H1 (cell line): ENCODE measurements at regions of chr3 and their contacts with region 1.

Region 1: GRCh38 chr3:49093853-49094767 is at the start of gene QRICH1:
- DNase-seq: peak; percentile 91 to 96
- H3K4me3 ChIP-seq: peak within 1 kb of the TSS; percentile 80 to 99 (median 89)
- H3K27ac ChIP-seq: peak within 1 kb of the TSS; percentile 88
- H3K4me1 ChIP-seq: no peaks in the 10 kb centered on the region; a peak in 1 of 7 replicates
- H3K27me3 ChIP-seq: no peaks in the 10 kb centered on the region
- CTCF ChIP-seq: peak; percentile 61 to 78 (median 65)
- EP300 ChIP-seq: no peak
- POLR2A ChIP-seq: peak; percentile 87 to 89
- RAD21 ChIP-seq: peak; percentile 47 to 59; a peak in 3 of 4 replicates
- total RNA-seq, gene QRICH1: 123 and 142 TPM in 2 replicates

Region 2: DNA sequence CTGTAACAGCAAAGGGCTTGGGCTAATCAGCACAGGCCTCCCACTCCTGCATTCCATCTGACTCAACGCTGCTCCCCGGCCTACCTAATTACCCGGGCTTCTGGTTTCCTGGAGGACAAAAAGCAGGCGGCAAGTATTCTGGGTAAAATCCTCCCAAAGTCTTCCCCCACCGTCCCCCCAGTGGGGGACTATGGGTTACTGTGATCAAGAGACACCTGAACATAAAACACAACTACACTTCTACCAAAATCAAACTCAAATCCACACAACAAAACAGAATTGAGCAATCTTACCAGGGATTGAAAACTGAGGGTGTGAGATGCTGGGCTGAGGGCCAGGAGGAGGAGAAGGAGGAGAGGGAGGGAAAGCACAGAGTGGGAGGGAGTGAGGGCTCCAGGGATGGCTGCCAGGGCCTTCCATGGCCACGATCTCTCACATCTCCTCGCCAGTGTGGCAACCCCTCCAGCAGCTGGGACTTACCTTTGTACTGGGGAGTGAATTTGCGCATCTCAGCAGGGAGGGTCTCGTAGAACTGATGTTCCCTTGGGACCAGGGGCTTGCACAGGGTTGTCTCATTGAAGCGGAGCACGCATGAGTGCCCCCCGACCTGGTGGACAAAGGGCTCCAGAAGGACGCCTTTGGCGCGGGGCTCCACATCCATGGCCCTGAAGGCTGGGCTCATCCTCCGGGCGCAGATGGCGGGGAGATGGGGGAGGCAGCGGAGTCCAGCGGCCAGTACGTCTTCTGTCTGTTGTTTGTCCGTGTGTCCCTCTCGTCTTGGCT is 399.3 kb before region 1 on chr3:
- CTCF ChIA-PET with region 1: no interaction called
- POLR2A ChIA-PET with region 1: no interaction called
- DNase-seq: no peak
- H3K4me3 ChIP-seq: peak overlapping the region in 3 of 4 experiments; percentile 12 to 36 (median 20); a peak in 5 of 8 replicates
- H3K27ac ChIP-seq: peak overlapping the region; percentile 69
- H3K4me1 ChIP-seq: peaks cover 6 to 7% (median 6%) of the 10 kb centered on the region in 4 experiments
- H3K27me3 ChIP-seq: no peaks in the 10 kb centered on the region
- CTCF ChIP-seq: no peak
- EP300 ChIP-seq: no peak
- POLR2A ChIP-seq: no peak
- RAD21 ChIP-seq: no peak

Region 3: DNA sequence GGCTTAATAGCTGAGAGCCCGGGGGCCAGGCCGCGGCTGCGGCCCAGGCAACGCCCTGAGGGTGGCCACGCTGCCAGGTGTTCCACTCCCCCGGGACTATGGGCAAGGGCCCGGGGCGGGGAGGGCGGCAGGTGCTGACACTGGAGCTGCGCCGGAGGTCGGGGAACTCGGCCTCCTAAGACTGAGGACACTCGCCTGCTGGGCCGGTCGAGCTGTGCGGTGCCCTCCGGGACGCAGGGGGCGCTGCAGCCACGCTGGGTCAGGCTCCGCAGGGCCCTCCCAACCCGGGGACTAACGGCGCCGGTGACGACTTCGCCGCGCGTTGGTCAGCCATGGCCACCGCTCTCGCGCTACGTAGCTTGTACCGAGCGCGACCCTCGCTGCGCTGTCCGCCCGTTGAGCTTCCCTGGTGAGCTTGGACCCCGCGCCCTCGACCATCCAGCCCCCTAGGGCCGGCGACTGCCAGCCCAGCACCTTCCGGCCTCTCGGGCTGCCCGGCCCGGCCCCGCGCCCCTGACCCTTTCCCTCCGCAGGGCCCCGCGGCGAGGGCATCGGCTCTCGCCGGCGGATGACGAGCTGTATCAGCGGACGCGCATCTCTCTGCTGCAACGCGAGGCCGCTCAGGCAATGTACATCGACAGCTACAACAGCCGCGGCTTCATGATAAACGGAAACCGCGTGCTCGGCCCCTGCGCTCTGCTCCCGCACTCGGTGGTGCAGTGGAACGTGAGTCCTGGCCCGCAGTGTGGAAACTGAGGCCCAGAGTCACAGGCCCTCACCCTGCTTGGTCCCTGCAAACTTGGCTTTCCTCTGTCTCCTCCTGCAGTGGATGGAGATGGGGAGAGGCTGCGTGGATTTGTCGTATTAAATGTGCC is 72.1 kb before region 1 on chr3 and contains the start of gene NDUFAF3:
- CTCF ChIA-PET with region 1: interaction called, 18 read pairs
- POLR2A ChIA-PET with region 1: interaction called, 141 read pairs
- DNase-seq: peak; percentile 82 to 98
- H3K4me3 ChIP-seq: peak within 1 kb of the TSS; percentile 84 to 97 (median 95)
- H3K27ac ChIP-seq: peak within 1 kb of the TSS; percentile 91
- H3K4me1 ChIP-seq: peaks cover 0 to 21% (median 13%) of the 10 kb centered on the region in 4 experiments; a peak in 6 of 7 replicates
- H3K27me3 ChIP-seq: no peaks in the 10 kb centered on the region; a peak in 1 of 7 replicates
- CTCF ChIP-seq: peak in 2 of 3 experiments; percentile 87 to 96; a peak in 3 of 4 replicates
- EP300 ChIP-seq: no peak; a peak in 1 of 3 replicates
- POLR2A ChIP-seq: peak in 1 of 2 experiments; percentile 88; a peak in 2 of 3 replicates
- RAD21 ChIP-seq: peak; percentile 25 to 41; a peak in 3 of 4 replicates
- total RNA-seq, gene NDUFAF3: 26.2 and 27.8 TPM in 2 replicates

Region 4: DNA sequence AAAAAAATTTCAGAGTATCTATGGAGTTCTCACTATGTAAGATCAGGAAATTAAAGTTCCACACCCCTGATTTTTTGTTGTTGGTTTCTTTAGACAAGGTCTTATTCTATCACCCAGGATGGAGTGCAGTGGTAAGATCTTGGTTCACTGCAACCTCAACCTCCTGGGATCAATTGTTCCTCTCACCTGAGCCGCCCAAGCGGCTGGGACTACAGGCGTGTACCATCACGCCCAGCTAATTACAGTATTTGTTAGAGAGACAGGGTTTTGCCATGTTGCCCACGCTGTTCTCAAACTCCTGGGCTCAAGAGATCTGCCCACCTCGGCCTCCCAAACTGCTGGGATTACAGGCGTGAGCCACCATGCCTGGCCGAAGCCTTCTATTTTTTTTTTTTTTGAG is 12.7 kb before region 1 on chr3:
- CTCF ChIA-PET with region 1: interaction called, 6 read pairs
- POLR2A ChIA-PET with region 1: interaction called, 31 read pairs
- DNase-seq: no peak
- H3K4me3 ChIP-seq: no peak overlapping the region
- H3K27ac ChIP-seq: no peak overlapping the region
- H3K4me1 ChIP-seq: no peaks in the 10 kb centered on the region
- H3K27me3 ChIP-seq: no peaks in the 10 kb centered on the region
- CTCF ChIP-seq: no peak
- EP300 ChIP-seq: no peak
- POLR2A ChIP-seq: no peak
- RAD21 ChIP-seq: no peak

Region 5: DNA sequence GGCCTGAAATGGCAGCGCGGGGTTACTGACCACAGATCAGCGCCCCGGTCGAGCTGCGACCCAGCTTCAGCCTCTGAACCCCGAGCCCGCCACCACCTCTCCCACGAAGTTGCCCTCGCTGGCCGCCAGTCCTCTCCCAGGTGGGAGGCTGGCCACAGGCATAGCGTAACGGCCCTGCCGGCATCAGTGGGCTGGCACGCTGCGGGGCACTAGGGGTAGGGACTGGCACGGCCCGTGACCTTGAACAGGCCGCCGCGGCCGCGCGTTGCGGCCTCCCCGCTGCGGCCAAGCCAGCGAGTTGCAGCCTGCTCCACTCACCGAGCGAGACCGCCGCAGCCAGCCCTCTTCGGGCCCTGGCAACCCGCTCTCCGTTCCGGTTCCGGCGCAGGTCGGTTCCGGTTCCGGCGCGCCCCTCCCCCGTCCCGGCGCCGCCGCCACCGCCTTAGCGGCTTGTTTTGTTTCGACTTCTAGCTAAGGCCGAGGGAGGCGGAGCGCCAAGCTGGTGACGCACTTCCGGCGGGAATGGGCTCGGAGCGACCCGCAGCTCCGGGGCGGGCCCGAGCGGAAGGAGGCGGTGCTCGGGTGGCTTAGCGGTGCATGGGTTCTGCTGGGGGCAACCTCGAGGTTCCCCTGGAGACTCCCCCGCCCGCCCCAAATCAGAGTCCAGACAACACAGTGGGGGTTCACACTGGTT is 26.5 kb after region 1 on chr3 and contains the start of gene USP19:
- CTCF ChIA-PET with region 1: interaction called, 5 read pairs
- POLR2A ChIA-PET with region 1: interaction called, 508 read pairs
- DNase-seq: peak; percentile 84 to 96
- H3K4me3 ChIP-seq: peak within 1 kb of the TSS; percentile 83 to 92 (median 86)
- H3K27ac ChIP-seq: peak within 1 kb of the TSS; percentile 78
- H3K4me1 ChIP-seq: peaks cover 0 to 11% (median 6%) of the 10 kb centered on the region in 4 experiments; a peak in 5 of 7 replicates
- H3K27me3 ChIP-seq: no peaks in the 10 kb centered on the region
- CTCF ChIP-seq: no peak
- EP300 ChIP-seq: peak in 1 of 2 experiments; percentile 60; a peak in 1 of 3 replicates
- POLR2A ChIP-seq: peak in 1 of 2 experiments; percentile 85; a peak in 2 of 3 replicates
- RAD21 ChIP-seq: 0 out of 4 replicates have a peak, but pooled peaks of 1 of the 2 experiments have one; percentile 2
- total RNA-seq, gene USP19: 64.9 and 65.8 TPM in 2 replicates

Region 6: DNA sequence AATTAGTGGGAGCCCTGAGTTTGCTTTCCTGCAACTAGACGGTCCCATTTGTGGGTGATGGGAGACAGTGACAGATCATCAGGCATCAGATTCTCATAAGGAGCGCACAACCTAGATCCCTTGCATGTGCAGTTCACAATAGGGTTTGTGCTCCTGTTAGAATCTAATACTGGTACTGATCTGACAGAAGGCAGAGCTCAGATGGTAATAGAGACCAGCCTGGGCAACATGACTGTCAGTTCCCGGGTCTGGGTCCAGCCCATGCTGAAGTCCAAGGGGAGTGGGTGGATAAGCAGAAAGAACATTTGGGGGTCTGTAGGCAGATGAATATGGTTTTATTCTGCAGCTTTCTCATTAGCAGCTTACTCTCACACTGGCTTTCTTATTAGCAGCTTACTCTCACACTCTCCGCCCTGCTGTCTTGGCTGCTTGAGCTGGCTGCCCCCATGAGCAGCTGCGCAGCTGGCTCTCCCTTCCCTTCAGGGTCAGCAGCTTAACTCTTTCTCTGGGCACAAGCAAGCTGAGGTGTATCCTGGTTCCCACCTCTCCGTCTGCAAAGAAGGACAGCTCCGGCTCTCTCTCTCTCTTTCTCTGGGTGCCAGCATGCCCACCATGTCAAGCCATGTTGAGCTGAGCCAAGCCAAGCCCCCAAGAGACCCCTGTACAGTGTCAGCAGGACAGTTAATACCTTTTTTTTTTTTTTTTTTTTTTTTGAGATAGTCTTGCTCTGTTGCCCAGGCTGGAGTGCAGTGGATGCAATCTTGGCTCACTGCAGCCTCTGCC is 123.8 kb after region 1 on chr3:
- CTCF ChIA-PET with region 1: no interaction called
- POLR2A ChIA-PET with region 1: no interaction called
- DNase-seq: no peak
- H3K4me3 ChIP-seq: no peak overlapping the region
- H3K27ac ChIP-seq: no peak overlapping the region
- H3K4me1 ChIP-seq: no peaks in the 10 kb centered on the region
- H3K27me3 ChIP-seq: no peaks in the 10 kb centered on the region
- CTCF ChIP-seq: no peak
- EP300 ChIP-seq: no peak
- POLR2A ChIP-seq: no peak
- RAD21 ChIP-seq: no peak